ENCODE measurements at regions of chr1 and their contacts with region 1.

Region 1: GRCh38 chr1:167676205-167676915 is 45.4 kb upstream of the MPZL1 start:
- DNase-seq: no peak
- ATAC-seq: no peak
- H3K4me3 ChIP-seq: no peak overlapping the region
- H3K27ac ChIP-seq: no peak overlapping the region
- H3K4me1 ChIP-seq: no peaks in the 10 kb centered on the region
- H3K27me3 ChIP-seq: no peaks in the 10 kb centered on the region
- CTCF ChIP-seq: no peak

Region 2: DNA sequence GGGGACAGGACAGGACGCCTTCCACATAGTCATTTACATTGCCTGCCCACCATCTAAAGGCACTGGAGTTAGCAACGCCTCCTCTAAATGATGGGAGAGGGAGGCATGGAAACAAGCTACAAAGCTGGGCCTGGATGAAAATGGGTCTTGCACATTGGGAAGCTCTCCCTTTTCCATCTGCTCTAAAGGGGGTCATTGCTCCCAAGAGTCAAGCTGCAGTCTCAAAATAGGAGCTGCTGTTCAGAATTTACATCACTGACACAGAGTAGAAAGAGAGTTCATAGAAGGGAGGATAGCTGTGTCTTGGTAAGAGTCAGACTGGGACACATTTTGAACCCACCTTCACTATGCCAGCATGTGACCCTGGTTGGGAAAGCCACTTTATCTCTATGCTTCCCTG is 19.7 kb before region 1 on chr1:
- CTCF ChIA-PET with region 1: no interaction called
- POLR2A ChIA-PET with region 1: no interaction called
- in situ Hi-C with region 1: no loop called
- intact Hi-C with region 1: loop called (anchors 2 kb)
- DNase-seq: no peak
- ATAC-seq: no peak
- H3K4me3 ChIP-seq: no peak overlapping the region
- H3K27ac ChIP-seq: no peak overlapping the region
- H3K4me1 ChIP-seq: 0 out of 2 replicates have a peak, but pooled peaks cover 6% of the 10 kb centered on the region
- H3K27me3 ChIP-seq: no peaks in the 10 kb centered on the region
- CTCF ChIP-seq: no peak

Region 3: GRCh38 chr1:167706931-167707877 is 30.8 kb after region 1 on chr1:
- CTCF ChIA-PET with region 1: no interaction called
- POLR2A ChIA-PET with region 1: no interaction called
- in situ Hi-C with region 1: no loop called
- intact Hi-C with region 1: no loop called
- DNase-seq: no peak
- ATAC-seq: no peak
- H3K4me3 ChIP-seq: no peak overlapping the region
- H3K27ac ChIP-seq: no peak overlapping the region
- H3K4me1 ChIP-seq: no peaks in the 10 kb centered on the region
- H3K27me3 ChIP-seq: peaks cover 14% of the 10 kb centered on the region
- CTCF ChIP-seq: no peak

Region 4: GRCh38 chr1:167721617-167722151 is 45.3 kb after region 1 on chr1 and contains the start of gene MPZL1:
- CTCF ChIA-PET with region 1: no interaction called
- POLR2A ChIA-PET with region 1: no interaction called
- in situ Hi-C with region 1: no loop called
- intact Hi-C with region 1: no loop called
- DNase-seq: peak; percentile 64
- ATAC-seq: peak; percentile 97
- H3K4me3 ChIP-seq: peak within 1 kb of the TSS; percentile 61 to 82
- H3K27ac ChIP-seq: peak within 1 kb of the TSS; percentile 80
- H3K4me1 ChIP-seq: peaks cover 16% of the 10 kb centered on the region
- H3K27me3 ChIP-seq: no peaks in the 10 kb centered on the region
- CTCF ChIP-seq: no peak
- total RNA-seq, gene MPZL1: 72.0 TPM

Region 5: GRCh38 chr1:167737169-167737568 is 60.8 kb after region 1 on chr1:
- CTCF ChIA-PET with region 1: no interaction called
- POLR2A ChIA-PET with region 1: no interaction called
- in situ Hi-C with region 1: no loop called
- intact Hi-C with region 1: no loop called
- DNase-seq: no peak
- ATAC-seq: no peak
- H3K4me3 ChIP-seq: no peak overlapping the region
- H3K27ac ChIP-seq: no peak overlapping the region
- H3K4me1 ChIP-seq: 0 out of 2 replicates have a peak, but pooled peaks cover 2% of the 10 kb centered on the region
- H3K27me3 ChIP-seq: no peaks in the 10 kb centered on the region
- CTCF ChIP-seq: no peak

Region 6: DNA sequence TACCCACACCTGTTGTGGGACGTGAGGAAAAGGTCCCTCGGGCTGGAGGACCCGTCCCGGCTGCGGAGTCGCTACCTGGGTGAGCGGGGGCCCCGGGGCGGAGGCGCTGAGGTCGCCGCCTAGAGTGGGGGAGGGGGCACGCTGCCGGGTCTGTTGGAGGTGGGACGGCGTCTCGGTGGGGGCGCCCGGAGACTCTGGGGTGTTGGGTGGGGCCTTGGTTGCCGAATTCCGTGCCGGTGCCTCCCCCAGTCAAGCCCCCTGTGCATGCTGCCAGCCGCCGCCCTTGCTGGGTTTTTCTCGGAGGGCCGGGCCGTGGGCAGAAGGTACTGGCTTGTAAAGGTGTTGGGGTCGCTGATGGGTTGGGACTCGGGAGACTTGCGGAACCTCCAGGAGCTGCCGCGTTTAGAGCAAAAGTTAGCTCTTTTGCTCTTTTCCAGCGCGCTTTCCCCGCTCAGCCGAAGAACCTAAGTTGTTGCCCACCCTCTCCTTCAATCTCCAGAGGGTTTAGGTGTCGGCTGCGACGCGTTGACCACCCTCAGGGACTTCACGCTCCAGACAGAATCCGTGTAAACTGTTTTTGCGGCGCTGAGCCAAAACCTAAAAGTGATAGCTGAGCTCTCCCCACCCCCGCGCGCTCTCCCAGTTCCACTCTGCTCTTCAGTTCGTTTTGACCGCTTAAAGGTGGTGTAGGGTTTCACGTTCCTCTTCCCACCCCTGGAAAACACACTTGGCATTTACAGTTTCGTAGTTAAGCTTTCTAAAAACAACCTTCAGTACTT is 260.8 kb after region 1 on chr1 and contains the start of gene MPC2:
- CTCF ChIA-PET with region 1: no interaction called
- POLR2A ChIA-PET with region 1: no interaction called
- in situ Hi-C with region 1: no loop called
- intact Hi-C with region 1: no loop called
- DNase-seq: peak; percentile 24
- ATAC-seq: peak; percentile 50
- H3K4me3 ChIP-seq: peak within 1 kb of the TSS; percentile 95 to 96
- H3K27ac ChIP-seq: peak within 1 kb of the TSS; percentile 99
- H3K4me1 ChIP-seq: peaks cover 29% of the 10 kb centered on the region
- H3K27me3 ChIP-seq: no peaks in the 10 kb centered on the region
- CTCF ChIP-seq: no peak
- total RNA-seq, gene MPC2: 71.7 TPM